A549 (cell line): ENCODE measurements at regions of chr2 and their contacts with region 1.

Region 1: DNA sequence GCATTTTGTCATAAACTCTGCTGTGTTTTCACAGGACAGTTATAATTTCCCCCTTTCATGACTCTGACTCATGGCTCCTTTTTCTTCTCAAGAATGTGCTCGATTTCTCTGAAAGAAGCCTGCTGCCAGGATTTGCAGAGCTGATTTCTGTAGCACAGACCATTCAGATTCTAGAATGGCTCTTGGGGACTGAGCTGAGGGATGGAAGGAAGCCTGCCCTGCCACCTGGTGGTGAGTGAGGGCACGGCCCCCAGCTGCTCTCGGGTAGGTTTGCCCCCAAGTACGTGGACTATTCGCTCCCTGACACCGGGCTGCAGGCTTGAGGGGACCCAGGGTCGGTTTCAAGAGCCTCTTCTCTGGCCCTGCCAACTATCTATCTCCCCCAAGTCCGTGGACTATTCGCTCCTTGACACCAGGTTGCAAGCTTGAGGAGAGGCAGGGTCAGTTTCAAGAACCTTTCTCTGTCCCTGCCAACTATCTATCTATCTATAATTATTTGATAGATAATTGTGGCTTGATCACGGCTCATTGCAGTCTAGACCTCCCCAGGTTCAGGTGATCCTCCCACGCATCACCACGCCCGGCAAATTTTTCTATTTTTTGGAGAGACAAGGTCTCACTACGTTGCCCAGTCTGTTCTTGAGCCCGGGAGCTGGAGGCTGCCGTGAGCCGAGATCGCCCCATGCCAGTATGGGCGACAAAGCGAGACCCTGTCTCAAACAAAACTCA is 1.4 kb upstream of the SMYD5 start:
- DNase-seq: peak; percentile 81 to 92
- ATAC-seq: peak; percentile 76 to 89
- H3K4me3 ChIP-seq: no peak overlapping the region
- H3K27ac ChIP-seq: no peak overlapping the region
- H3K4me1 ChIP-seq: peaks cover 16% of the 10 kb centered on the region
- CTCF ChIP-seq: peak; percentile 92
- EP300 ChIP-seq: no peak
- POLR2A ChIP-seq: no peak
- RAD21 ChIP-seq: peak; percentile 72 to 73

Region 2: DNA sequence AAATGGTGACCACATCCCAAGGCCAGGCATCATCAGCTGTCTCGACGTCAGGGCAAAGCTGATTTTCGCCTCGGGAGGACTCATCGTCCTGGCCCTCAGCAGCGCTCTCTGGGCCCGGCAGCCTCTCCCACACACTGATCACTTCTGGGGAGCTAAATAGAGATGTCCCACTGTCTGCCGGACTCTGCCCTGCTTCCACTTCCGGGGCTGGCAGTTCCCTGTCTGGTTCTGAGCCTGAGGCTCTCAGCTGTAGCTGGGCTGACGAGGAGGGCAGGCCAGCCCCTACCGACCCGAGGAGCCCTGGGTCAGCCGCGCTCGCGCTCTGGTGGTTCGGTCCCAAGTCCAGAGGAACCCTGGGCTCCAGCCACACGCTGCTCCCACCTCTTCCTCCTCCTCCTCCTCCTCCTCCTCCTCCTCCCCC is 131.9 kb before region 1 on chr2:
- CTCF ChIA-PET with region 1: interaction called, 34 read pairs
- POLR2A ChIA-PET with region 1: no interaction called
- DNase-seq: no peak
- ATAC-seq: no peak
- H3K4me3 ChIP-seq: no peak overlapping the region
- H3K27ac ChIP-seq: no peak overlapping the region
- H3K4me1 ChIP-seq: no peaks in the 10 kb centered on the region
- CTCF ChIP-seq: no peak
- EP300 ChIP-seq: no peak
- POLR2A ChIP-seq: no peak
- RAD21 ChIP-seq: no peak

Region 3: GRCh38 chr2:73187549-73187948 is 25.1 kb before region 1 on chr2:
- CTCF ChIA-PET with region 1: interaction called, 13 read pairs
- POLR2A ChIA-PET with region 1: interaction called, 3 read pairs
- DNase-seq: no peak
- ATAC-seq: no peak; a peak in 1 of 6 replicates
- H3K4me3 ChIP-seq: no peak overlapping the region
- H3K27ac ChIP-seq: no peak overlapping the region
- H3K4me1 ChIP-seq: no peaks in the 10 kb centered on the region
- CTCF ChIP-seq: no peak
- EP300 ChIP-seq: no peak
- POLR2A ChIP-seq: no peak
- RAD21 ChIP-seq: no peak

Region 4: GRCh38 chr2:73225513-73226360 is 13.1 kb after region 1 on chr2:
- CTCF ChIA-PET with region 1: interaction called, 57 read pairs
- POLR2A ChIA-PET with region 1: no interaction called
- DNase-seq: no peak
- ATAC-seq: no peak; a peak in 1 of 6 replicates
- H3K4me3 ChIP-seq: no peak overlapping the region
- H3K27ac ChIP-seq: no peak overlapping the region
- H3K4me1 ChIP-seq: no peaks in the 10 kb centered on the region
- CTCF ChIP-seq: no peak
- EP300 ChIP-seq: no peak
- POLR2A ChIP-seq: no peak
- RAD21 ChIP-seq: no peak

Region 5: GRCh38 chr2:73260034-73260984 is 47.7 kb after region 1 on chr2:
- CTCF ChIA-PET with region 1: interaction called, 11 read pairs
- POLR2A ChIA-PET with region 1: no interaction called
- DNase-seq: peak; percentile 76 to 84
- ATAC-seq: peak; percentile 69 to 84
- H3K4me3 ChIP-seq: no peak overlapping the region
- H3K27ac ChIP-seq: no peak overlapping the region
- H3K4me1 ChIP-seq: no peaks in the 10 kb centered on the region
- CTCF ChIP-seq: peak; percentile 61
- EP300 ChIP-seq: no peak
- POLR2A ChIP-seq: no peak
- RAD21 ChIP-seq: peak; percentile 61 to 68

Region 6: GRCh38 chr2:73359915-73360697 is 147.5 kb after region 1 on chr2:
- CTCF ChIA-PET with region 1: no interaction called
- POLR2A ChIA-PET with region 1: no interaction called
- DNase-seq: peak in 1 of 2 experiments; percentile 23
- ATAC-seq: no peak; a peak in 1 of 6 replicates
- H3K4me3 ChIP-seq: no peak overlapping the region
- H3K27ac ChIP-seq: no peak overlapping the region
- H3K4me1 ChIP-seq: no peaks in the 10 kb centered on the region
- CTCF ChIP-seq: peak; percentile 48
- EP300 ChIP-seq: no peak
- POLR2A ChIP-seq: no peak
- RAD21 ChIP-seq: peak; percentile 20 to 36; a peak in 3 of 5 replicates